ENCODE measurements at regions of chr7 and their contacts with region 1.

Region 1: DNA sequence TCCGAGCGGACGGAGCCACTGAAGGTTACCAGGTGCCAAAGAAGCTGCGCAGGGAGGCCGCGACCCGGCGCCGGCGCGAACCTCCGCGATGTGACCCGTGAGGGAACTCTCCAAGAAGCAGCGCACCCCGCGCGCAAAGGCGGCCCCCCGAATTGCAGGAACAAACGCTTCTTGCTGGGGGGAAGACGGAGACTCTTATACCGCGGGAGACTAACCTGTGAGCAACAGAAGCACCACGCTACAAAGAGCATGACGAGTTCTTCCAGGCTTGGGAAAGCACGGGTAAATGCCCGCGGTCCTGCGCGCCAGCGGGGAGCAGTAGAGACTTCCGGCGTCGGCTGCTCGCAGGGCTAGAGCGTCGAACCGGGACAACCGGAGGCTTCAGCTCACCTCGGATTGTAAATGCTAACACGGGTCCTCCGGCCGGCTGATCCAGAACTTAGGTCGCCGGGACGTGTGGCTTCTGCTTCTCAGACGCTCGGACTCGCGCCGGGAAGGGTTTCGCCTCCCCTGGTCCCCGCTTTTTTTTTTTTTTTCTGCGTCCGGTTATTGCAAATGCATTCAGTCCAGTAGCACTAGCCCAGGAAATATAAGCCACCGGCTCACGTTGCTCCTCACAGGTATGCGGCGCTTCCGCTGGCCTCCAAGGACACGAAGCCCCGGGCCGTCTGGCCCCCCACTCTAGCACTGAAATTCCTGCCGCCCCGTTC is at the start of gene COA1:
- DNase-seq: peak; percentile 88 to 94
- ATAC-seq: peak; percentile 98 to 99 (median 98)
- H3K4me3 ChIP-seq: peak within 1 kb of the TSS; percentile 77
- H3K27ac ChIP-seq: peak within 1 kb of the TSS; percentile 96
- H3K4me1 ChIP-seq: peaks cover 34% of the 10 kb centered on the region
- H3K27me3 ChIP-seq: no peaks in the 10 kb centered on the region
- CTCF ChIP-seq: no peak
- total RNA-seq, gene COA1: 41.5 to 60.7 (median 53.9) TPM

Region 2: DNA sequence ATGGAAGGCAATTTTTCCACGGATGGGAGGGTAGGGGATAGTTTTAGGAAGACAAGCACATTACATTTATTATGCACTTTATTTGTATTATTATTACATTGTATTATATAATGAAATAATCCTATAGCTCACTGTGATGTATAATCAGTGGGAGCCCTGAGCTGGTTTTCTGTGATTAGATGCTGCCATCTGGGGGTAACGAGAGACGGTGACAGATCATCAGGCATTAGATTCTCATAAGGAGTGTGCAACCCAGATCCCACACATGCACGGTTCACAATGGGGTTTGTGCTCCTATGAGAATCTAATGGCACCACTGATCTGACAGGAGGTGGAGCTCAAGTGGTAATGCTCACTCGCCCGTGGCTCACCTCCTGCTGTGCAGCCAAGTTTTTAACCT is 250.3 kb before region 1 on chr7:
- intact Hi-C with region 1: loop called in 1 of 2 experiments (anchors 10 kb)
- DNase-seq: no peak
- ATAC-seq: peak in 1 of 4 donors; percentile 47
- H3K4me3 ChIP-seq: no peak overlapping the region
- H3K27ac ChIP-seq: no peak overlapping the region
- H3K4me1 ChIP-seq: no peaks in the 10 kb centered on the region
- H3K27me3 ChIP-seq: no peaks in the 10 kb centered on the region
- CTCF ChIP-seq: no peak

Region 3: GRCh38 chr7:43784030-43785001 is 54.9 kb after region 1 on chr7:
- intact Hi-C with region 1: loop called in 1 of 2 experiments (anchors 10 kb)
- DNase-seq: no peak
- ATAC-seq: no peak
- H3K4me3 ChIP-seq: no peak overlapping the region
- H3K27ac ChIP-seq: no peak overlapping the region
- H3K4me1 ChIP-seq: peaks cover 26% of the 10 kb centered on the region
- H3K27me3 ChIP-seq: no peaks in the 10 kb centered on the region
- CTCF ChIP-seq: no peak

Region 4: GRCh38 chr7:43834463-43835251 is 105.3 kb after region 1 on chr7:
- intact Hi-C with region 1: loop called in 1 of 2 experiments (anchors 10 kb)
- DNase-seq: no peak
- ATAC-seq: no peak
- H3K4me3 ChIP-seq: peak overlapping the region; percentile 26
- H3K27ac ChIP-seq: no peak overlapping the region
- H3K4me1 ChIP-seq: no peaks in the 10 kb centered on the region
- H3K27me3 ChIP-seq: peaks cover 0 to 4% (median 0%) of the 10 kb centered on the region in 3 donors
- CTCF ChIP-seq: no peak

Region 5: GRCh38 chr7:43906331-43907010 is 177.1 kb after region 1 on chr7 and contains the start of gene URGCP:
- intact Hi-C with region 1: no loop called
- DNase-seq: peak; percentile 59 to 77
- ATAC-seq: peak; percentile 70 to 76 (median 74)
- H3K4me3 ChIP-seq: peak within 1 kb of the TSS; percentile 72
- H3K27ac ChIP-seq: peak within 1 kb of the TSS; percentile 81
- H3K4me1 ChIP-seq: peaks cover 23% of the 10 kb centered on the region
- H3K27me3 ChIP-seq: no peaks in the 10 kb centered on the region
- CTCF ChIP-seq: no peak
- total RNA-seq, gene URGCP: 41.3 to 54.4 (median 44.8) TPM